Posterior vena cava (tissue), 2 donors: ENCODE measurements at regions of chr14 and their contacts with region 1.

Region 1: DNA sequence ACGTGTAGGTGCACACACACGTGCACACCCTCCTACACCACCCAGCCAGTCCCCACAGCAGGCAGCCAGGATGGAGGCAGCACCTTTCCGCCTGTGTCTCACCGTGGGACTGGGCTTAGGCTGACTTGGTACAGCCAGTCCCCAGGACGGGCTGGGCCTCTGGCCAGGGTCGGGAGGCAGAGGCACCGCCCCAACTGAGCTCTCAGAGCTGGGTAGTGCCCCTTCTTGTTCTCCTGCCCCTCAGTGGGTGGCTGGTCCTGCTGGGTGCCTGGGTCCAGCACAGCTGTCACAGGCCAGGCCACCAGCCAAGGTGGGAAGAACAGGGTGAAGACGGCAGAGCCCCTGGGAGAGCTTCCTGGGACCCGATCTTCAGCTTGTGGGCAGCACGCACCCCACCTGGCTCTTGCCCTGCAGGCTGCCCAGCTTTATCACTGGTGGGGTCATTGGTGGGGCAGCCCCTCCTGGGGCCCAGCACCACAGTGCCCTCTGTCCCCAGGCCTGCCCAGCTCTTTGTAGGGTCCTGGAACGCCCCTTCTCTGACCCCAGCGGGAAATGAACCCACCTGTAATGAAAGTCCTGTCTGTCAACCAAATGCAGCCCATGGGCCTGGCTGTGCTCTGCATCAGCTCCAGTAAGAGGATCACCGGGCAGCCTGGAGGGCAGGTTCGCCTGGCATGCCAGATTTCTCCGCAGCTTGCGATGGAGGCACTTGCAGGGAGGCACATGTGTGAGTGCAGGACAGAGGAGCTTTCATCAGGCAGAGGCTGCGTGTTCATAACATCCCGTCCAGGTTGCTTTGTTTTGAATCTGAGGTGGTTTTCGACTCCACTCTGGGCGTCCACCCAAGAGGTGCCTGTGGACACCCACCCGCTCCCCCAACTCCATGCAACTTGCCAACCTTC is 14.7 kb downstream of the CDCA4 start:
- DNase-seq: peak; percentile 60

Region 2: DNA sequence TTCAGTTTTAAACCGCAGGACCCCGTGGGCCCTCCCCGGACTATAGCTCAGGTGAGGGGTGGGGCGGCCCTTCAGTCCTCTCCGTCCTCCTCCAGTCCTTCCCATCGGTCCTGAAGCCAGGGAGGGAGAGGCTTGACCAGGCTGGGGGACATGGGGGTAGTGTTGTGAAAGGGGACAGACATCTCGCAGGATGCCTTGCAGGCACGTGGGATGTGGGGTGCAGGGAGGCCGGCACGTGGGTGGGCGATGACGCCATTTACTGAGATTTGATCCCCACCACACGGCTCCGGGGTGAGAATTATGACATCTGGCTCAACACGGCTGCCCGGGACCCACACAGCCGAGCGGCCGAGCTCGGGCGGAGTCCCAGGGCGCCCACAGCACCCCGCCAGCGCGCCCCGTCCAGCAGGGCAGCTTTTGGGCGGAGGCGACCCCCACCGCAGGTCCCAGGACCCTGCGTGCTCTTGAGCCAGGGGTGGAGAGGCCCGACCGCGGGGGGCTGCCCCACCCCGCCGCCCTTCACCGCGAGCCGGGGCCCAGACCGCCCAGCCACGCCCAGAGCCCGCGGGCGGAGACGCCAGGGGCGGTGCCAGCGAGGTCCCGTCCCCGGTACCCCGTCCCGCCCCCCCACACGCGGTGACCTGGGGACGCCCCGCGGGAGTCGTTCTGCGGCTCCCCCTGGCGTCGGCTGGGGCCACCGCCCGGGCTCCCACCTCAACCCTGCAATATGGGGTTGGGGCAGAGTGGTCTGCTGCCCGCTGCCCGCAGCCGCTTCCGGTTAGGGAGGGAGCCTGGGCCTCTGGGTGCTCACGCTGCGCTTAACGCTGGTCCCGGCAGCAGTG is 1914.9 kb before region 1 on chr14:
- intact Hi-C with region 1: no loop called
- DNase-seq: no peak

Region 3: GRCh38 chr14:104993808-104994591 is 12.2 kb before region 1 on chr14:
- intact Hi-C with region 1: loop called in 1 of 2 experiments (anchors 2 kb)
- DNase-seq: peak; percentile 77

Region 4: GRCh38 chr14:105709281-105710118 is 703.3 kb after region 1 on chr14:
- intact Hi-C with region 1: no loop called
- DNase-seq: peak; percentile 67